ENCODE measurements at regions of chr1 and their contacts with region 1.

Region 1: GRCh38 chr1:246450611-246451251 is 56.3 kb downstream of the SMYD3 start:
- DNase-seq: peak; percentile 61
- H3K4me3 Mint-ChIP-seq: no peak overlapping the region
- H3K27ac Mint-ChIP-seq: no peak overlapping the region
- H3K4me1 Mint-ChIP-seq: no peaks in the 10 kb centered on the region
- H3K27me3 Mint-ChIP-seq: no peaks in the 10 kb centered on the region
- CTCF ChIP-seq: peak; percentile 98

Region 2: DNA sequence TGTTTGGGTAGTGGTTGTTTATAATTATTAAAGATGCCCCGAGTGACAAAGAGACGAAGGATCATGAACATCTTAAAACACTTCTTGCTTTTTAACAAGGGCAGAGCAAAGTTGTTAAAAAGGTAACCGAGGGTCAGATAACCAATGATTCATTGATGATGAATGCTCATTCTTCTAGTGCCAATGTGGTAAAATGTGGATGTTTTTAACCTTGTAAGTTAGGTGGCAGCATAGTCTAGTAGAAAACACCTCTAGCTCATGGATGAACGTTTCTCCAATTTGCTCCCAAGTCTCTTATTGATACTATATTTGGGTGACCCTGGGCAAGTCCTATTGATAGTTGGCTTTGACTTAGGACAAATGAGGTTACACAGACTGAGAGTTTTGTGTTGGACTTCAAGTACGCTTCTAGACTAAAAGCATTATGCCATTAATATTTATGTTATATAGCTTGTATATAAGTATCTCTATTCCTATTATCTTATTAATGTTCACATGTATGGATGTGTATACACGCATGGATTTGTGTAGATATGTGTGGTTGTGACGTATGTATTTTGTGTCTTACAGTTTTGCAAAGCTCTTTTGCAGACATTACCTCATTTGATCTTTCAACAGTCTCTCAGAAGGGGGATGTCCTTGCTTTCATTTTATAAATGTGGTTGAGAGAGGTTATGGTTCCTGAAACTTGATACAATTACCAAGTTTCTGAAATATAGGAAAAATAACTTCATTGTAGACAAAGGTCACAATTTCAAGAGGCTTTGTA is 1127.9 kb before region 1 on chr1:
- CTCF ChIA-PET with region 1: interaction called, 10 read pairs
- POLR2A ChIA-PET with region 1: no interaction called
- intact Hi-C with region 1: loop called (anchors 1 kb)
- DNase-seq: peak; percentile 55
- H3K4me3 Mint-ChIP-seq: no peak overlapping the region
- H3K27ac Mint-ChIP-seq: no peak overlapping the region
- H3K4me1 Mint-ChIP-seq: no peaks in the 10 kb centered on the region
- H3K27me3 Mint-ChIP-seq: peaks cover 18% of the 10 kb centered on the region
- CTCF ChIP-seq: peak; percentile 46

Region 3: DNA sequence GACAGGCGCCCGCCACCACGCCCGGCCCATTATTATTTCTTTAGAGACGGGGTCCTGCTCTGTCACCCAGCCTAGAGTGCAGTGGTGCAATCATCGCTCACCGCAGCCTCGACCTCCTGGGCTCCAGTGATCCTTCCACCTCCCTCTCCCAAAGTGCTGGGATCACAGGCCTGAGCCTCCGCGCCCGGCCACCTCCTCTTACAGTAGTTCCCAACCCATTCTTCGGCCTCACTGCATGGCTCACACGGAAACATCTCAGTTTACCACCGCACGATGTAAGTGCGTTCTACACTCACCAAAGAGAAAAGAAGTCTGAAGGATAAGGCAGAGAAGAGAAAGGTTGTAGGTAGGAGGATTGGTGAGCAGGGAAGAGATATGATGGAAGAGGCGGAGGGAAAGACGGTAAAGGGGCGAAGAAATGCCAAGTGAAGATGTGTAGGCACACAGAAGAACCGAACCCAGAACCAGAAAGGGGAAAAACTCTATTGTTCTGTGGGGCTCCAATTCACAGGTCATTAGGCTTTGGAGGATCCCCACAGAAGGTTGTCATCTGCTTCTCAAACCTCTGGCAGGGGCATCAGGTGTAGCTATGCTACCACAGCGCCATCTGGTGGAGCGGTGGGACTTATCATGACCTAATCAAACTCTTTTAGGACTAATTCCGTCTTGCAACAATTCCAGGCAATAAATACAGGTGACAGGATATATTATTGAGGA is 447.8 kb before region 1 on chr1:
- CTCF ChIA-PET with region 1: interaction called, 10 read pairs
- POLR2A ChIA-PET with region 1: no interaction called
- intact Hi-C with region 1: no loop called
- DNase-seq: peak; percentile 96
- H3K4me3 Mint-ChIP-seq: no peak overlapping the region
- H3K27ac Mint-ChIP-seq: no peak overlapping the region
- H3K4me1 Mint-ChIP-seq: peaks cover 53% of the 10 kb centered on the region
- H3K27me3 Mint-ChIP-seq: no peaks in the 10 kb centered on the region
- CTCF ChIP-seq: peak; percentile 99

Region 4: GRCh38 chr1:246280551-246280950 is 170.2 kb before region 1 on chr1:
- CTCF ChIA-PET with region 1: interaction called, 16 read pairs
- POLR2A ChIA-PET with region 1: no interaction called
- intact Hi-C with region 1: loop called (anchors 2 kb)
- DNase-seq: peak; percentile 47
- H3K4me3 Mint-ChIP-seq: no peak overlapping the region
- H3K27ac Mint-ChIP-seq: no peak overlapping the region
- H3K4me1 Mint-ChIP-seq: no peaks in the 10 kb centered on the region
- H3K27me3 Mint-ChIP-seq: no peaks in the 10 kb centered on the region
- CTCF ChIP-seq: peak; percentile 43

Region 5: DNA sequence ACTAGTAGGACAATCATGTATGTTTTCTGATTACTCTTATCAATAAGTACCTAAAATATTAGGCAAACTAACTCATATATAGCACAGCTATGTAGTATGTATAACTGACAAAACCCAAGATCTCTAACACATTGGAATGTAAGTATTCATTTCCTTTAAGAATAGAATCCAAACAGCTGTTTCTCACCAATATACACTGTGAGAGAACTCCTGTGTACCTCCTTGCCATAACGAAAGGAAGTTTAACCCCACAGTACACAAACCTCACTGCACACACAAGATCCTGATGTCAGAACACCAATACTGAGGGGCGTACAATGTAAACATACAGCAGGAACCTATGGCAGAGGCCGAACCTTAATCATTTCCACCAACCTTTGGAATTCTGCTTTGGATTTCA is 56.6 kb before region 1 on chr1:
- CTCF ChIA-PET with region 1: interaction called, 13 read pairs
- POLR2A ChIA-PET with region 1: no interaction called
- intact Hi-C with region 1: no loop called
- DNase-seq: no peak
- H3K4me3 Mint-ChIP-seq: no peak overlapping the region
- H3K27ac Mint-ChIP-seq: no peak overlapping the region
- H3K4me1 Mint-ChIP-seq: no peaks in the 10 kb centered on the region
- H3K27me3 Mint-ChIP-seq: no peaks in the 10 kb centered on the region
- CTCF ChIP-seq: no peak

Region 6: DNA sequence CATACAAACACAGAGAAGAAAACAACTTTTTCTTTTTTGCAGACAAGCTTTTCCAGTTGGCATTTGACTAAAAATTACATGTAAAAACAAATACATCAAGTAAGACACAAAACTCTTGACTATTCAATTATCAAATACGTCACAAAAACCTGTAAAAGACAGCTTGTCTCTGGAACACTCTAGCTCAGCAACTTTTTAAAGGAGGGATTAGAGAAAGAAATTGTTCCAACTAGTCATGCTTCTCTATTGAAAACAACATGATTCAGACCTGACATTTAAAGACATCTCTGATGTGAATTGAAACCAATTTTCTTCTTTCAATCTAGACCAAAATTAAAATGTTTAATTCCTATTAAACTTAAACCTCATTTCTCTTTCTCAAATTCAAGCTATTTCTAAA is 26.0 kb after region 1 on chr1:
- CTCF ChIA-PET with region 1: interaction called, 12 read pairs
- POLR2A ChIA-PET with region 1: no interaction called
- intact Hi-C with region 1: no loop called
- DNase-seq: no peak
- H3K4me3 Mint-ChIP-seq: no peak overlapping the region
- H3K27ac Mint-ChIP-seq: no peak overlapping the region
- H3K4me1 Mint-ChIP-seq: peaks cover 6% of the 10 kb centered on the region
- H3K27me3 Mint-ChIP-seq: no peaks in the 10 kb centered on the region
- CTCF ChIP-seq: no peak

Measured in MCF 10A (cell line).